PC-3 (cell line): ENCODE measurements at regions of chr7 and their contacts with region 1.

Region 1: DNA sequence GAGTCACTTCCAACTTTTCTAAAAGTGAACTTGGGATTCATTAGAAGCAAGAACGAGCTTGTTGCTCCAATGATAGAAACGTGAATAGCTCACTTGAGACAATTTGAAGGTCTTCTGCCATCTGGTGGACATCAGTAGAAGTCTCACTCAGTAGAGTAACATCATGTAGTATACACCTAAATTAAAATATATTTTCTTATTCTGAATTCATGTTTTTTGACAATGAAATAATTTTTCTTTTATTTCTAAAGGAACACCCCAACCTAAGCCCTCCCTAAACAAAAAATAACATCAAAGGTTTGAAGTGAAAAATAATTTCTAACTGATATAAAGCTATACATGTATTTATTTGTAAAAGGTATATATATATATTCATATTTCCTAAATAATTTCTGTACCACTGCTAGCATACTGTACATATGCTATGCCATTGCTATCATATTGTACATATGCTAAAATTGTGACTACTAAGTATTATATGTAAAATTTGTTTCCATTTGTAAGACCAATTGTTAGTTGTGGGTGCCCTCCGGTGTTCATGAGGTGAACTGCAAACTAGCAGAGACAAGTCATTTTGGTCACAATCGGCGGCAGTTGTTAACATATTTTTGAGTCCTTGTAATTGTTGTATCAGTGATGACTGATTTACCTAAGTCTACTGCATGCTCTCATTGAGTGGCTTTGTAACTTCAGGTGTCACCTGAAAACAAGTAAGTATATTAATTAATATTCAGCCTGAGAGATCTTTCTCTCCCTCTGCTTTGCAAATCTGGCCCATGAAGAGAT is 121.9 kb downstream of the PTPRZ1 start:
- DNase-seq: peak; percentile 78
- ATAC-seq: peak; percentile 96
- H3K4me3 ChIP-seq: no peak overlapping the region
- H3K27ac ChIP-seq: no peak overlapping the region
- H3K4me1 ChIP-seq: no peaks in the 10 kb centered on the region
- H3K27me3 ChIP-seq: 0 out of 2 replicates have a peak, but pooled peaks cover 4% of the 10 kb centered on the region
- CTCF ChIP-seq: peak; percentile 72

Region 2: GRCh38 chr7:121126801-121127534 is 867.9 kb before region 1 on chr7:
- CTCF ChIA-PET with region 1: no interaction called
- POLR2A ChIA-PET with region 1: no interaction called
- intact Hi-C with region 1: loop called (anchors 1 kb)
- DNase-seq: peak; percentile 32
- ATAC-seq: no peak
- H3K4me3 ChIP-seq: no peak overlapping the region
- H3K27ac ChIP-seq: no peak overlapping the region
- H3K4me1 ChIP-seq: no peaks in the 10 kb centered on the region
- H3K27me3 ChIP-seq: no peaks in the 10 kb centered on the region
- CTCF ChIP-seq: peak; percentile 57

Region 3: GRCh38 chr7:121329191-121330052 is 665.4 kb before region 1 on chr7:
- CTCF ChIA-PET with region 1: no interaction called
- POLR2A ChIA-PET with region 1: no interaction called
- intact Hi-C with region 1: loop called (anchors 10 kb)
- DNase-seq: no peak
- ATAC-seq: no peak
- H3K4me3 ChIP-seq: no peak overlapping the region
- H3K27ac ChIP-seq: no peak overlapping the region
- H3K4me1 ChIP-seq: no peaks in the 10 kb centered on the region
- H3K27me3 ChIP-seq: peaks cover 49% of the 10 kb centered on the region
- CTCF ChIP-seq: no peak

Region 4: GRCh38 chr7:121605317-121605680 is 389.5 kb before region 1 on chr7:
- CTCF ChIA-PET with region 1: no interaction called
- POLR2A ChIA-PET with region 1: no interaction called
- intact Hi-C with region 1: loop called (anchors 1 kb)
- DNase-seq: peak; percentile 12
- ATAC-seq: peak; percentile 83
- H3K4me3 ChIP-seq: no peak overlapping the region
- H3K27ac ChIP-seq: no peak overlapping the region
- H3K4me1 ChIP-seq: no peaks in the 10 kb centered on the region
- H3K27me3 ChIP-seq: peaks cover 37% of the 10 kb centered on the region
- CTCF ChIP-seq: peak; percentile 25; the same call in 1 of the 2 replicates

Region 5: DNA sequence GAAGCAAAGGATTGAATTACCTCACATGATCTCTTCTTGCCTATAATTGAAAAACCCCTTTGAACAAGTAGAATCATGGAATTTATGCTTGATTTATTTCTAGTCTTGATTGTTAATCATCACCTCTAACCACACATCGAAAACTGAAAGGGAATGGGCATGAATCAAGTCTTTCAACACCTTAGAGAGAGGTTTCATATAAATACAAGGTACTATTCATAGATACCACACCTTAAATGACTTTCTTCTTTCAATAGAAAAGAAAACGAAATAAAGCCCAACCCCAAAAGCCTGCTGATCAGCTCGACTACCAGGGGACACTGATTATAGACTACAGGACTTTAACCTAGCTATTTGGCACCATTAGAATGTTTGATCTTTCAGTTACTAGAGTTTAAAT is 250.5 kb before region 1 on chr7:
- CTCF ChIA-PET with region 1: no interaction called
- POLR2A ChIA-PET with region 1: no interaction called
- intact Hi-C with region 1: no loop called
- DNase-seq: no peak
- ATAC-seq: no peak
- H3K4me3 ChIP-seq: no peak overlapping the region
- H3K27ac ChIP-seq: no peak overlapping the region
- H3K4me1 ChIP-seq: no peaks in the 10 kb centered on the region
- H3K27me3 ChIP-seq: peaks cover 15% of the 10 kb centered on the region; the same call in 1 of the 2 replicates
- CTCF ChIP-seq: no peak

Region 6: DNA sequence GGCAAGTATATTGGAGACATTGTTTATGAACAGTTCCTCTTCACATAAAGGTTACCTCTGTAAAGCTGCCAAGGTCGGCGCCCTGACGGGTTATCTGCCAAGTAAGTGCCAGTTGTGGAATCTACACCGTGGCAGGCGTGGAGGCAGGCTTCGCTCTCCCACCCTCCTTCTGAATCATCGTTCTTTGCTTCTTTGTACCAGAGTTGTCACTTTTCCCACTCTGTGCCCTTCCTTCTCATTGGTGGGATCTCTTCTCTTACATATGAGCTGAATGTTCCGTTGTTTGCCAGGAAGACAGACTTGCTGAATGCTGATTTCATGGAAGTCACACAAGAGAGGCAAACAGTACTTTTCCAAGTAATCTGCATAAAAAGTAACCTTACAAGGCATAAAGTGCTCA is 162.5 kb before region 1 on chr7:
- CTCF ChIA-PET with region 1: no interaction called
- POLR2A ChIA-PET with region 1: interaction called, 47 read pairs
- intact Hi-C with region 1: no loop called
- DNase-seq: no peak
- ATAC-seq: no peak
- H3K4me3 ChIP-seq: no peak overlapping the region
- H3K27ac ChIP-seq: no peak overlapping the region
- H3K4me1 ChIP-seq: no peaks in the 10 kb centered on the region
- H3K27me3 ChIP-seq: no peaks in the 10 kb centered on the region
- CTCF ChIP-seq: no peak